Aorta (tissue), 5 donors: ENCODE measurements at regions of chr5 and their contacts with region 1.

Region 1: GRCh38 chr5:96172436-96172835 is 210.8 kb upstream of the ELL2 start:
- DNase-seq: no peak
- ATAC-seq: no peak
- H3K4me3 ChIP-seq: no peak overlapping the region
- H3K27ac ChIP-seq: no peak overlapping the region
- H3K4me1 ChIP-seq: peaks cover 0 to 3% of the 10 kb centered on the region in 2 donors
- H3K27me3 ChIP-seq: no peaks in the 10 kb centered on the region

Region 2: GRCh38 chr5:96070625-96071246 is 101.7 kb before region 1 on chr5:
- intact Hi-C with region 1: no loop called
- DNase-seq: no peak
- ATAC-seq: no peak
- H3K4me3 ChIP-seq: no peak overlapping the region
- H3K27ac ChIP-seq: no peak overlapping the region
- H3K4me1 ChIP-seq: peaks cover 0 to 4% of the 10 kb centered on the region in 2 donors
- H3K27me3 ChIP-seq: no peaks in the 10 kb centered on the region

Region 3: DNA sequence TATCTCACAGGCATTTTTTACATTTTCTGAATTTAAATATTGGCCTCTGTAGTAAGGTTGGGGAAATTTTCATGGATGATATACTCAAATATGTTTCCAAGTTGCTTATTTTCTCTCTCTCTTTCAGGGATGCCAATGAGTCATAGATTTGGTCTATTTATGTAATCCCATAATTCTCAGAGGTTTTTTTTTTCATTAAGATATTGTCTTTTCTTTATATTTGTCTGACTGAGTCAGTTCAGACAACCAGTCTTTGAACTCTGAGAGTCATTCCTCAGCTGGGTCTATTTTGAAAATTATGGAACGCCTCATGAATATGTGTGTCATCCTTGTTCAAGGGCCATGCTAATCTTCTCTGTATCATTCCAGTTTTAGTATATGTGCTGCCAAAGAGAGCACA is 37.4 kb after region 1 on chr5:
- intact Hi-C with region 1: loop called in 1 of 2 experiments (anchors 5 kb)
- DNase-seq: no peak
- ATAC-seq: no peak
- H3K4me3 ChIP-seq: no peak overlapping the region
- H3K27ac ChIP-seq: no peak overlapping the region
- H3K4me1 ChIP-seq: no peaks in the 10 kb centered on the region
- H3K27me3 ChIP-seq: no peaks in the 10 kb centered on the region

Region 4: GRCh38 chr5:96256778-96257470 is 84.5 kb after region 1 on chr5:
- intact Hi-C with region 1: no loop called
- DNase-seq: no peak
- ATAC-seq: no peak
- H3K4me3 ChIP-seq: no peak overlapping the region
- H3K27ac ChIP-seq: peak overlapping the region in 1 of 2 donors; percentile 71
- H3K4me1 ChIP-seq: peaks cover 5 to 12% of the 10 kb centered on the region in 2 donors
- H3K27me3 ChIP-seq: no peaks in the 10 kb centered on the region